SK-N-SH (cell line): ENCODE measurements at regions of chrX and their contacts with region 1.

Region 1: GRCh38 chrX:152941328-152942106 is 43.6 kb downstream of the ZNF185 start:
- DNase-seq: peak; percentile 96
- H3K4me3 ChIP-seq: peak overlapping the region; percentile 60 to 63
- H3K27ac ChIP-seq: peak overlapping the region in 1 of 2 experiments; percentile 58; a peak in 1 of 4 replicates
- H3K4me1 ChIP-seq: peaks cover 0 to 7% of the 10 kb centered on the region in 2 experiments; a peak in 1 of 4 replicates
- H3K27me3 ChIP-seq: peaks cover 6% of the 10 kb centered on the region; the same call in 1 of the 2 replicates
- CTCF ChIP-seq: peak; percentile 81
- EP300 ChIP-seq: no peak
- RAD21 ChIP-seq: peak; percentile 86

Region 2: DNA sequence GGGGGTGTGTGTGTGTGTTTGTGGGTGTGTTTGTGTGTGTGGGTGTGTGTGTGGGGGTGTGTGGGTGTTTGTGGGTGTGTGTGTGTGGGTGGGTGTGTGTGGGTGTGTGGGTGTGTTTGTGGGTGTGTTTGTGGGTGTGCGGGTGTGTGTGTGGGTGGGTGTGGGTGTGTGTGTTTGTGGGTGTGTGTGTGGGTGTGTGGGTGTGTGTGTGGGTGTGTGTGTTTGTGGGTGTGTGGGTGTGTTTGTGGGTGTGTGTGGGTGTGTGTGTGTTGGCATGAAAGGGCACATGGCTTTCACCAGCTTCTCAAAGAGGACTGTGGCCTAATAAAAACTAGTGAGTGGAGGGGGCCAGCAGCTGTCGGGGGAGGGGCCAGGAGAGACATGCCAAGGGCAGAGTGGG is 69.0 kb before region 1 on chrX:
- CTCF ChIA-PET with region 1: no interaction called
- POLR2A ChIA-PET with region 1: no interaction called
- DNase-seq: no peak
- H3K4me3 ChIP-seq: no peak overlapping the region
- H3K27ac ChIP-seq: no peak overlapping the region
- H3K4me1 ChIP-seq: no peaks in the 10 kb centered on the region
- H3K27me3 ChIP-seq: peaks cover 23% of the 10 kb centered on the region; the same call in 1 of the 2 replicates
- CTCF ChIP-seq: no peak
- EP300 ChIP-seq: no peak
- RAD21 ChIP-seq: no peak

Region 3: GRCh38 chrX:152904151-152905080 is 37.1 kb before region 1 on chrX:
- CTCF ChIA-PET with region 1: interaction called, 12 read pairs
- POLR2A ChIA-PET with region 1: no interaction called
- DNase-seq: peak; percentile 86
- H3K4me3 ChIP-seq: no peak overlapping the region; a peak in 1 of 4 replicates
- H3K27ac ChIP-seq: no peak overlapping the region
- H3K4me1 ChIP-seq: peaks cover 6 to 32% of the 10 kb centered on the region in 2 experiments; a peak in 2 of 4 replicates
- H3K27me3 ChIP-seq: no peaks in the 10 kb centered on the region; the same call in 1 of the 2 replicates
- CTCF ChIP-seq: peak; percentile 85
- EP300 ChIP-seq: no peak
- RAD21 ChIP-seq: peak; percentile 60

Region 4: DNA sequence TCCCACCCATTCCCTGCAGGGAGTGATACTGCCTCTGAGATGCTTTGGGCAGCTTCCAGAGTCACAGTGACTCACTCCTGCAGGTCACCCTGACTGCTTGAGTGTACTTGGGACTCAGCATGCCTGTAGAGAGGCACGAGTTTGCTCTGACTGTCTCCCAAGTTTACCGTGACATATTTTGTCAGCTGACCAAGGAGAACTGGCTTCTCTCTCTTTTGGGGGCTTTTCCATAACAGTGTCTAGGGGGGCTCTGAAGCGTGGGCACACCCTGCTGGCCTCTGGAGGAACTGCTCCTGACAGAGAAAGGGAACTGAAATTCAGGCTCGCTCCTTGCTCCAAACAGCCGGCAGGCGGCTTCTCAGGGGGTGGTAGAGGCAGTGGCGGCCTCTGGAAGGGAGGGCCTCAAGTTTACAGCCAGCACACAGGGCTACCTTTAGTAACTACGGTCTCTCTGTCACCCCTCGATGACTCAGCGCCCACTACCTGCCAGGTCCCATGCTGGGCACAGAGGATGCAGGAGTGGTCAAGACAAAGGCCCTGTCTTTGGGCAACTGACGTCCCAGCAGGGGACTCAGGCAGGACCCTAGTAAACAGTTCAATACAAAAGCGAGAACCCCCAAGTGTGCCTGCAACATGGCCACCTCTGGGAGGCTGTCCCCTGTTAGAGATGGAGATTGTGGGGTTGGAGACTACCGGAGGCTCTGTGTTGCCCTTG is 25.8 kb before region 1 on chrX:
- CTCF ChIA-PET with region 1: interaction called, 17 read pairs
- POLR2A ChIA-PET with region 1: no interaction called
- DNase-seq: peak; percentile 77
- H3K4me3 ChIP-seq: no peak overlapping the region
- H3K27ac ChIP-seq: no peak overlapping the region
- H3K4me1 ChIP-seq: peaks cover 0 to 14% of the 10 kb centered on the region in 2 experiments; a peak in 1 of 4 replicates
- H3K27me3 ChIP-seq: peaks cover 11% of the 10 kb centered on the region
- CTCF ChIP-seq: peak; percentile 75
- EP300 ChIP-seq: no peak
- RAD21 ChIP-seq: peak; percentile 57

Region 5: GRCh38 chrX:152926279-152926678 is 15.2 kb before region 1 on chrX:
- CTCF ChIA-PET with region 1: interaction called, 33 read pairs
- POLR2A ChIA-PET with region 1: no interaction called
- DNase-seq: peak; percentile 70
- H3K4me3 ChIP-seq: no peak overlapping the region
- H3K27ac ChIP-seq: no peak overlapping the region
- H3K4me1 ChIP-seq: peaks cover 0 to 3% of the 10 kb centered on the region in 2 experiments; a peak in 1 of 4 replicates
- H3K27me3 ChIP-seq: peaks cover 4% of the 10 kb centered on the region; the same call in 1 of the 2 replicates
- CTCF ChIP-seq: peak; percentile 68
- EP300 ChIP-seq: no peak
- RAD21 ChIP-seq: peak; percentile 63

Region 6: DNA sequence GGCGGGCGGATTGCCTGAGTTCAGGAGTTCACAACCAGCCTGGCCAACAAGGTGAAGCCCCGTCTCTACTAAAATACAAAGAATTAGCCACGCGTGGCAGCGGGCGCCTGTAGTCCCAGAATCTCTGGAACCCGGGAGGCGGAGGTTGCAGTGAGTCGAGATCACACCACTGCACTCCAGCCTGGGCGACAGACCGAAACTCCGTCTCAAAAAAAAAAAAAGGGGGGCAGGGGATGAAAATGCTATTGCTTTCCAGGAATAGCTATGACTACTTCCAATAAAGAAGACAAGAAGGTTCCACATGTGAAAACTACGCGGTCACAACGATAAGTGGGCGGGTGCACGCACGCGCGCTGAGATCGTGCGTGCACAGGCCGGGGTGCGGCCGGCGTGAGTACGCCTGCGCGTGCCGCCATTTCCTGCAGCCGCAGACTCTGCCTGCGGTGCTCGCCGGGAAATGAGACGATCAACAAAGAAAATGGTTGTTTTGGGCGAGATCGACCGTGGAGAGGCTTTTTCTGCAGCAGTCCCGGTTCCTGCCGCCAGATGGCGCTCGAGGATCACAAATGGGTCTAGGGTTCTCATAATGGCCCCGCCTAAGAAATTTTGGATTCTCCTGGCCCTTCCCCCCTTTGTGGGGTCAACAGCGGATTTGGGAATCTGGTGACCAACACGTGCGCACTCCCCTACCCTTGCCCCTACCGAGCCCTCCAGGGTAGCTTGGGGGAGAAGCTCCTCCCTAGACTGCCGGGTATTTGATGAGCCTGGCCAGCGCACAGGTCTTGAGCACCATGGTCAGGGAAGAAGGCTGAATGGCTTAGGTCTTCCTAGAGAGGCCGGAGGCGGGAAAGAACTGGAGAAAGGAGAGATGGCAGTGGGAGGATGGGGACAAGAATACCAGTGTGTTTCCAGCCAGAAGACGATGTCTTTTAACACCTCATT is 17.3 kb after region 1 on chrX:
- CTCF ChIA-PET with region 1: interaction called, 23 read pairs
- POLR2A ChIA-PET with region 1: no interaction called
- DNase-seq: peak; percentile 87
- H3K4me3 ChIP-seq: no peak overlapping the region; a peak in 2 of 4 replicates
- H3K27ac ChIP-seq: no peak overlapping the region
- H3K4me1 ChIP-seq: no peaks in the 10 kb centered on the region; a peak in 1 of 4 replicates
- H3K27me3 ChIP-seq: no peaks in the 10 kb centered on the region; the same call in 1 of the 2 replicates
- CTCF ChIP-seq: peak; percentile 89
- EP300 ChIP-seq: no peak
- RAD21 ChIP-seq: peak; percentile 93

Region 7: DNA sequence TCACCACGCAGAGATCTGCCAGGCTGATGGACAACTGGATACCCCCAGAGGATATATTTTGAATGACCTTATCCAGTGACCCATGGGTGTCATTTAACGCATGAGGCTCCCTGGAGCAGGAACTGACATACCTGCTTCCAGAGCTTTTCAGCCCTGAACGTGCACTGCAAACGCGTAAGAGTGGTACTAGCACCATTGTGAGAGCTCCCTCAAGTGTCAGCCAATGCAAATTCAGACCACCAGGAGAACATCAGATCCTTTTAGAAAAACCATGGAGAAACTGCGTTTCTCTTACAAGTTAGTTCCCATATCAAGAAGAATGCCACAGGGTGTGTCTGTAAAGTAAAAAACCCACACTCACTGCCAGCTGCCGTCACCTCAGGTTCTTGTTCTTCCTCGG is 497.0 kb after region 1 on chrX:
- CTCF ChIA-PET with region 1: interaction called, 14 read pairs
- POLR2A ChIA-PET with region 1: no interaction called
- DNase-seq: no peak
- H3K4me3 ChIP-seq: no peak overlapping the region
- H3K27ac ChIP-seq: no peak overlapping the region
- H3K4me1 ChIP-seq: no peaks in the 10 kb centered on the region
- H3K27me3 ChIP-seq: peaks cover 46% of the 10 kb centered on the region
- CTCF ChIP-seq: peak; percentile 31; the same call in 1 of the 2 replicates
- EP300 ChIP-seq: no peak
- RAD21 ChIP-seq: peak; percentile 59

Region 8: GRCh38 chrX:153470435-153471363 is 529.2 kb after region 1 on chrX and contains the start of gene HAUS7:
- CTCF ChIA-PET with region 1: interaction called, 10 read pairs
- POLR2A ChIA-PET with region 1: no interaction called
- DNase-seq: peak; percentile 95
- H3K4me3 ChIP-seq: peak within 1 kb of the TSS; percentile 65 to 73
- H3K27ac ChIP-seq: peak within 1 kb of the TSS in 1 of 2 experiments; percentile 24; a peak in 2 of 4 replicates
- H3K4me1 ChIP-seq: peaks cover 0 to 16% of the 10 kb centered on the region in 2 experiments; a peak in 1 of 4 replicates
- H3K27me3 ChIP-seq: no peaks in the 10 kb centered on the region
- CTCF ChIP-seq: peak; percentile 76
- EP300 ChIP-seq: no peak
- RAD21 ChIP-seq: peak; percentile 83
- polyA plus RNA-seq, gene HAUS7: 27.1 and 39.7 TPM in 2 replicates